ENCODE measurements at regions of chr17 and their contacts with region 1.

Region 1: DNA sequence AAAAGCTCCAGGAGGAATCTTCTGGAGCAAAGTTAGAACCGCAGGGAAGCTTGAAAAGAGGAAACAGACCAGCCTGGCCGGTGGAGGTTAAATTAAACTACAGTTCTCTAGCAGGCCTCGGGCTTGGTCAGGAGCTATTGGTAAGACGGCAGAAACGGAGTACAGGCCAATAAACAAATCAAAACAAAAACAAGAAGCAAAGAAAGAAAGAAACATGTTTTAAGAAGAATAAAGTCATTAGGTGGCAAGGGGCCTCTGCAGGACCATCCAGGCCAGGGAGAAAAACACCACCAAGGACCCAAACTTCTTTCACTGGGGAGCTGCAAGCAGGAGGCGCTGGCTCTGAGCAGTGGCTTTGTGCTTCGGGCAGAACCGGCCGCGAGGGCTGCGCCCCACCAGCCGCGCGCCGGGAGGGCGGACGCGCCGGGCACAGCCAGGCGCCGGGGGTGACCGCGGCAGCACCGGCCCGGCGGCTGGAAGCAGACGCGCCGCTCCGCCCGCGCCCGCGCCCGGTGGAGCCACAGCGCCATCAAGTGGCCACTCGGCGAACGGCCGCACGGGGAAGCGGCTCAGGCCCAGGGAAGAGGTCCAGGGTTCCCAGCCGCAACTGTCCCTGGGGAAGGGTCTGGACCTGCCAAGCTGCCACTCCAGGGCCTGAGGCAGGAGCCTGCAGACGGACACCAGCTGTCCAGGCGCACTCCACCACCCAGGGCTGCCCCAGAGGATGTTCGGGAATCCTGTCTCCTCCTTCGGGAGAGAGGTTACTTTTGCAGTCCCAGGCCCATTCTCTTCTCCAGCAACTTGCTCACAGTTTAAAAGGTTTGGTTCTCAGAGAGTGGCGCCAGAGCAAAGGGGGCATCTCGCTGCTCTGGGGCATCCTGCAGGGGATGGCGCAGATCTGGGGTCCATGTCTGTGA is 419.4 kb downstream of the SOX9 start:
- DNase-seq: no peak
- H3K4me3 ChIP-seq: peak overlapping the region in 3 of 4 donors; percentile 25 to 32 (median 26)
- H3K27ac ChIP-seq: no peak overlapping the region
- H3K4me1 ChIP-seq: peaks cover 4 to 14% (median 12%) of the 10 kb centered on the region in 4 donors
- H3K27me3 ChIP-seq: peaks cover 0 to 19% (median 0%) of the 10 kb centered on the region in 4 donors
- CTCF ChIP-seq: peak; percentile 78 to 94 (median 92)
- EP300 ChIP-seq: no peak
- POLR2A ChIP-seq: no peak

Region 2: DNA sequence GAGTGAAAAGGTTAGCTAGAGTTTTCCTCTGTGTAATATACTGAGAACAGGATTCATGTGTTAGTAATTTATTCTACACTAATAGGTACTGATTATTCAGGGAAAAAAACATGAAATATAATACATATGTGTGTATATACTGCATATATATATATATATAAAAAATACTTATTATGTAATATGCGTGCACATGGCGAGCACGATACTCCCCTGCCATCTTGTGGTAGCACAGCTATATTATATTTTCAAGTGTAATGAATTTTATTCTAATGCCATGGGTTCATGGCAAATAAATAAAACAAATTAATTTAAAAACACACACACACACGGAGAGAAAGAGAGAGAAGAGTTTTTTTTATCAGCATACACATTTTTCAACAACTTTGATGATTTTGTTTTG is 1910.3 kb before region 1 on chr17:
- intact Hi-C with region 1: loop called (anchors 5 kb)
- DNase-seq: no peak
- H3K4me3 ChIP-seq: no peak overlapping the region
- H3K27ac ChIP-seq: no peak overlapping the region
- H3K4me1 ChIP-seq: no peaks in the 10 kb centered on the region
- H3K27me3 ChIP-seq: peaks cover 0 to 4% (median 0%) of the 10 kb centered on the region in 4 donors
- CTCF ChIP-seq: peak in 1 of 3 experiments; percentile 15
- EP300 ChIP-seq: no peak
- POLR2A ChIP-seq: no peak

Region 3: GRCh38 chr17:70767102-70767701 is 1773.0 kb before region 1 on chr17:
- intact Hi-C with region 1: loop called (anchors 5 kb)
- DNase-seq: no peak
- H3K4me3 ChIP-seq: no peak overlapping the region
- H3K27ac ChIP-seq: no peak overlapping the region
- H3K4me1 ChIP-seq: no peaks in the 10 kb centered on the region
- H3K27me3 ChIP-seq: no peaks in the 10 kb centered on the region
- CTCF ChIP-seq: peak; percentile 41 to 63 (median 48)
- EP300 ChIP-seq: no peak
- POLR2A ChIP-seq: no peak

Region 4: GRCh38 chr17:71460943-71461342 is 1079.3 kb before region 1 on chr17:
- intact Hi-C with region 1: loop called (anchors 10 kb)
- DNase-seq: no peak
- H3K4me3 ChIP-seq: no peak overlapping the region
- H3K27ac ChIP-seq: no peak overlapping the region
- H3K4me1 ChIP-seq: no peaks in the 10 kb centered on the region
- H3K27me3 ChIP-seq: no peaks in the 10 kb centered on the region
- CTCF ChIP-seq: peak in 2 of 3 experiments; percentile 6 to 13
- EP300 ChIP-seq: no peak
- POLR2A ChIP-seq: no peak